ENCODE measurements at regions of chr20 and their contacts with region 1.

Region 1: GRCh38 chr20:63641792-63642544 is 11.3 kb downstream of the STMN3 start:
- DNase-seq: peak; percentile 95
- ATAC-seq: peak; percentile 71
- H3K4me3 Mint-ChIP-seq: peak overlapping the region; percentile 71
- H3K27ac Mint-ChIP-seq: no peak overlapping the region
- H3K4me1 Mint-ChIP-seq: peaks cover 21% of the 10 kb centered on the region
- H3K27me3 Mint-ChIP-seq: no peaks in the 10 kb centered on the region
- CTCF ChIP-seq: peak; percentile 57

Region 2: GRCh38 chr20:63530789-63531160 is 111.2 kb before region 1 on chr20:
- CTCF ChIA-PET with region 1: no interaction called
- POLR2A ChIA-PET with region 1: no interaction called
- intact Hi-C with region 1: no loop called
- DNase-seq: no peak
- ATAC-seq: no peak
- H3K4me3 Mint-ChIP-seq: no peak overlapping the region
- H3K27ac Mint-ChIP-seq: no peak overlapping the region
- H3K4me1 Mint-ChIP-seq: peaks cover 7% of the 10 kb centered on the region
- H3K27me3 Mint-ChIP-seq: no peaks in the 10 kb centered on the region
- CTCF ChIP-seq: no peak

Region 3: DNA sequence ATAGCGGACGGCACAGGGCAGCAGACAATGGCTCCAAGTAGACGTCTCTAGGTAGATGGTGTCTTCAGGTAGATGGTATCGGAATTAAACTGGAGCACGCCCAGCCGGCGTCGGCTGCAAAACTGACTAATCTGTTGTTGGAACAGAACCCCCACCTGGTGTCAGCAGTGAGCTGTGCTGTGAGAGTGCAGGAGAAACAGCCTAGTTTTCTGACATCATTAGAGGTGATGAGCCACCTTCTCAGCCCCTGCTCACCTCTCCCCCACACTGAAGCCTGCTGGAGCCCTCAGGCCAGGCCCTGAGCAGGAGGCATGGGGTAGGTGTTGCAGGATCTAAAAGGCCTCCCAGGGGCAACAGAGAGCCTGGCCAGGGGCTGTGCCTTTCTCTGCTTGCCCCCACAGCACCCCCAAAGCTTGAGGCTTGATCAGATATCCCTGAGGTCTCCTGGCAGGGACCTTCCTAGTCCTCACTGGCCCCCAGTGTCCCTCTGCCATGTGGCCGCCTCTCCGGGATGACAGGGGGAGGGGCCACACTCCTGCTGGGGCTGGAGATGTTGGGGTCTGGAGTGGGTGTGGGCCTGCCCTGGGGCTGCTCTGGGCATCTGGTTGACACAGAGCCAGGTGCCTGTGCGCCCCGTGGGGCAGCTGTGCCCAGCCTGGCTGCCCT is 61.0 kb before region 1 on chr20:
- CTCF ChIA-PET with region 1: interaction called, 11 read pairs
- POLR2A ChIA-PET with region 1: no interaction called
- intact Hi-C with region 1: no loop called
- DNase-seq: peak; percentile 83
- ATAC-seq: peak; percentile 98
- H3K4me3 Mint-ChIP-seq: no peak overlapping the region
- H3K27ac Mint-ChIP-seq: no peak overlapping the region
- H3K4me1 Mint-ChIP-seq: no peaks in the 10 kb centered on the region
- H3K27me3 Mint-ChIP-seq: peaks cover 3% of the 10 kb centered on the region
- CTCF ChIP-seq: peak; percentile 48

Region 4: GRCh38 chr20:63627129-63627750 is 14.7 kb before region 1 on chr20:
- CTCF ChIA-PET with region 1: interaction called, 16 read pairs
- POLR2A ChIA-PET with region 1: interaction called, 57 read pairs
- intact Hi-C with region 1: no loop called
- DNase-seq: peak; percentile 95
- ATAC-seq: peak; percentile 81
- H3K4me3 Mint-ChIP-seq: peak overlapping the region; percentile 93
- H3K27ac Mint-ChIP-seq: peak overlapping the region; percentile 97
- H3K4me1 Mint-ChIP-seq: peaks cover 31% of the 10 kb centered on the region
- H3K27me3 Mint-ChIP-seq: no peaks in the 10 kb centered on the region
- CTCF ChIP-seq: no peak

Region 5: GRCh38 chr20:63652168-63653077 is 10.5 kb after region 1 on chr20:
- CTCF ChIA-PET with region 1: interaction called, 13 read pairs
- POLR2A ChIA-PET with region 1: interaction called, 14 read pairs
- intact Hi-C with region 1: no loop called
- DNase-seq: peak; percentile 51
- ATAC-seq: peak; percentile 34
- H3K4me3 Mint-ChIP-seq: peak overlapping the region; percentile 68
- H3K27ac Mint-ChIP-seq: no peak overlapping the region
- H3K4me1 Mint-ChIP-seq: peaks cover 20% of the 10 kb centered on the region
- H3K27me3 Mint-ChIP-seq: no peaks in the 10 kb centered on the region
- CTCF ChIP-seq: no peak

Region 6: DNA sequence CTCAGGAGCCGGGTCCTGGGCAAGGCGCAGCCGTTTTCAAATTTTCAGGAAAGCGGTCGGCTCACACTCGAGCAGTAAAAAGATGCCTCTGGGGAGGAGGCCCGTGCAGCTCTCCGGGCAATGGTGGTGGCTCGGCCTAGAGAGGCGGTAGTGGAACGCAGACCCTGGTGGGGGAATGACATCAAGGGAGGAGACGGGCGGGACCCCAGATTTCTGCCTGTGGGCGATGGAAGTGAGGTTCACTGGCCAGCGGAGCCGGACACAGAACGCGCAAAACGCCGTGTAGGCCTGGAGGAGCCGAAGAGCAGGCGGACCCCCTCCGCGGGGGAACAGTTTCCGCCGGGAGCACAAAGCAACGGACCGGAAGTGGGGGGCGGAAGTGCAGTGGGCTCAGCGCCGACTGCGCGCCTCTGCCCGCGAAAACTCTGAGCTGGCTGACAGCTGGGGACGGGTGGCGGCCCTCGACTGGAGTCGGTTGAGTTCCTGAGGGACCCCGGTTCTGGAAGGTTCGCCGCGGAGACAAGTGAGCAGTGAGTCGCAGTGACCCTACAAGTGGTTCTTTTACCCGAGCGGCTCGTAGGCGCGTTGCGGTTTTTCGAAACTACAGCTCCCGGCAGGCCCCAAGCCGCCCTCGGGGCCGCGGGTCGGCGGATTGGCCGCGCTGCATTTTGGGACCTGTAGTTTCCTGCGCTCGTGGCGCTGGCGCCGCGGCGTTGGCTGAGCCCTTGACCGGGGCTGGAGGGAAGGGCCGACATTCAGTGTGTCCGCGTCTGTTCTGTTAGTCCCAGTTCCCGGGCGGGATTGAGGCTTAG is 16.2 kb after region 1 on chr20 and contains the start of gene RTEL1:
- CTCF ChIA-PET with region 1: interaction called, 13 read pairs
- POLR2A ChIA-PET with region 1: interaction called, 14 read pairs
- intact Hi-C with region 1: no loop called
- DNase-seq: peak; percentile 89
- ATAC-seq: peak; percentile 80
- H3K4me3 Mint-ChIP-seq: peak within 1 kb of the TSS; percentile 96
- H3K27ac Mint-ChIP-seq: peak within 1 kb of the TSS; percentile 93
- H3K4me1 Mint-ChIP-seq: peaks cover 24% of the 10 kb centered on the region
- H3K27me3 Mint-ChIP-seq: no peaks in the 10 kb centered on the region
- CTCF ChIP-seq: no peak
- total RNA-seq, gene RTEL1: 37.4 to 39.1 TPM

Region 7: GRCh38 chr20:63750807-63751470 is 109.0 kb after region 1 on chr20:
- CTCF ChIA-PET with region 1: no interaction called
- POLR2A ChIA-PET with region 1: no interaction called
- intact Hi-C with region 1: no loop called
- DNase-seq: peak; percentile 86
- ATAC-seq: peak; percentile 88
- H3K4me3 Mint-ChIP-seq: peak overlapping the region; percentile 63
- H3K27ac Mint-ChIP-seq: peak overlapping the region; percentile 89
- H3K4me1 Mint-ChIP-seq: peaks cover 21% of the 10 kb centered on the region
- H3K27me3 Mint-ChIP-seq: no peaks in the 10 kb centered on the region
- CTCF ChIP-seq: no peak

Measured in activated CD8-positive, alpha-beta T cell treated with anti-CD3 and anti-CD28 coated beads for 36 hours (primary cell).